Activated CD4-positive, alpha-beta T cell treated with anti-CD3 and anti-CD28 coated beads for 36 hours (primary cell): ENCODE measurements at regions of chr1 and their contacts with region 1.

Region 1: DNA sequence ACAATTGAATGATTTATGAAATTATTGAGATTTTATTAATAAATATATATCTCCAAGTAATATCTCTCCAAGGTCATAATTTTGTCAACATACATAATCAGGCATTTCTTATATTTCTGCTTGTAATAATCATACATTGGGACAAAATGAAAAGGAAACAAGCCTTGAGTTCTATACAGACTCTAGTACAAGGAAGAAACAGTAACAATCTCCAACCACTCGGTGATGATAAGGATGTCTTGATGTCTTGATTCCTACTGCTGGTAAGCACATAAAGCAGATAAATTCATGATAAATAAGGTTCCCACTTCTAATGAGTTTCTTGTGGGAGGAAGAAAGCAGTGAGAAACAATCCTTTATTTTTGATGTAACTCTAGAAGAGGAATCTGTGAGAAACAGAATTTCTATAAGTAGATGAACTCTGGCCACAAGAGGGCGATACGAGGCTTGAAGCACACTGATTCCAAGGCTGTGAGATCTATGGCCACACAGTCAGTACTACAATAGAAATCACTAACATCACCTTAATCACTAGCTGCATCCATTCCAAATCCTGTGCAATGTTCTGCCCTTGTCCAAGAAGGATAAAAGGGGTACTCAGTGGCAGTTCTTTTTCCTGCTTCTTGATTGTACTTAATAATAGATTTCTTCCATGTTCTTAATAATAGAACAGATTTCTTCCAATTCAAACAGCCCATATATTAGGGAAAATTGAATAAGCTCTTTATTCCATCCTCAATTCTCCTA is 41.4 kb upstream of the LRRC8B start:
- DNase-seq: peak; percentile 91
- ATAC-seq: peak; percentile 86
- H3K4me3 Mint-ChIP-seq: no peak overlapping the region
- H3K27ac Mint-ChIP-seq: no peak overlapping the region
- H3K4me1 Mint-ChIP-seq: peaks cover 21% of the 10 kb centered on the region
- H3K27me3 Mint-ChIP-seq: no peaks in the 10 kb centered on the region

Region 2: GRCh38 chr1:88341447-88341846 is 1141.7 kb before region 1 on chr1:
- CTCF ChIA-PET with region 1: no interaction called
- POLR2A ChIA-PET with region 1: no interaction called
- intact Hi-C with region 1: no loop called
- DNase-seq: no peak
- ATAC-seq: no peak
- H3K4me3 Mint-ChIP-seq: no peak overlapping the region
- H3K27ac Mint-ChIP-seq: no peak overlapping the region
- H3K4me1 Mint-ChIP-seq: no peaks in the 10 kb centered on the region
- H3K27me3 Mint-ChIP-seq: no peaks in the 10 kb centered on the region

Region 3: DNA sequence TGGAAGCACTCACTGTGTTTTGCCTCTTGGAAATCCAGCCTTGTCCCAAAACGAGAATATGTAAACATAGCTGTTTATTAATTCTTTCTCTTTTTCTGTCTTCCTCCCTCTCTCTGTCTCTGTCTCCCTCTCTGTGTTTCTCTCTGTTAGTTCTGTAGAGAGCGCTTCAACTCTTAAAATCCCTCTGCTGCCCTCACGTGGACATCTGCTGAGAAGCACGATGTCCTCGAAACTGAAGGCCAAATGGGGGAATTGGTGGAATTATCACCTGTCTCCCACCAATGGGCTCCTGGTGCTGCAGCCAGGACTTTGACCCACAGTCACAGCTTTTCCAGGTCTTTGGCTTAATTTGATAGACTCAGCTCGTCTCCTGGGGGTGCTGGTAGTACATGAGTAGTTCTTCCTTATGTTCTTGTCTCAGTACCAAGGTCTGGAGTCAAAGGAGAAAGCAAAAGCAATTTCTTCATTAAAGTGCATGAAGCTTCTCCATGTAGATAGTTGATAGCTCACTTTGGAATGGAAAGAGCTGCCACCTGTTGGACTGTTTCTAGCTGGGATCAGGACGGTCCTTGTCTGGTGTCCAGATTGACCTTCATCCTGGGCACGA is 124.8 kb before region 1 on chr1:
- CTCF ChIA-PET with region 1: no interaction called
- POLR2A ChIA-PET with region 1: no interaction called
- intact Hi-C with region 1: no loop called
- DNase-seq: peak; percentile 90
- ATAC-seq: peak; percentile 73
- H3K4me3 Mint-ChIP-seq: peak overlapping the region; percentile 55
- H3K27ac Mint-ChIP-seq: peak overlapping the region; percentile 84
- H3K4me1 Mint-ChIP-seq: peaks cover 46% of the 10 kb centered on the region
- H3K27me3 Mint-ChIP-seq: no peaks in the 10 kb centered on the region

Region 4: GRCh38 chr1:89433421-89433820 is 49.8 kb before region 1 on chr1:
- CTCF ChIA-PET with region 1: no interaction called
- POLR2A ChIA-PET with region 1: no interaction called
- intact Hi-C with region 1: no loop called
- DNase-seq: no peak
- ATAC-seq: no peak
- H3K4me3 Mint-ChIP-seq: no peak overlapping the region
- H3K27ac Mint-ChIP-seq: no peak overlapping the region
- H3K4me1 Mint-ChIP-seq: peaks cover 4% of the 10 kb centered on the region
- H3K27me3 Mint-ChIP-seq: peaks cover 5% of the 10 kb centered on the region

Region 5: GRCh38 chr1:89465201-89465600 is 18.0 kb before region 1 on chr1:
- CTCF ChIA-PET with region 1: interaction called, 14 read pairs
- POLR2A ChIA-PET with region 1: no interaction called
- intact Hi-C with region 1: no loop called
- DNase-seq: peak; percentile 53
- ATAC-seq: peak; percentile 94
- H3K4me3 Mint-ChIP-seq: no peak overlapping the region
- H3K27ac Mint-ChIP-seq: no peak overlapping the region
- H3K4me1 Mint-ChIP-seq: peaks cover 24% of the 10 kb centered on the region
- H3K27me3 Mint-ChIP-seq: peaks cover 56% of the 10 kb centered on the region

Region 6: DNA sequence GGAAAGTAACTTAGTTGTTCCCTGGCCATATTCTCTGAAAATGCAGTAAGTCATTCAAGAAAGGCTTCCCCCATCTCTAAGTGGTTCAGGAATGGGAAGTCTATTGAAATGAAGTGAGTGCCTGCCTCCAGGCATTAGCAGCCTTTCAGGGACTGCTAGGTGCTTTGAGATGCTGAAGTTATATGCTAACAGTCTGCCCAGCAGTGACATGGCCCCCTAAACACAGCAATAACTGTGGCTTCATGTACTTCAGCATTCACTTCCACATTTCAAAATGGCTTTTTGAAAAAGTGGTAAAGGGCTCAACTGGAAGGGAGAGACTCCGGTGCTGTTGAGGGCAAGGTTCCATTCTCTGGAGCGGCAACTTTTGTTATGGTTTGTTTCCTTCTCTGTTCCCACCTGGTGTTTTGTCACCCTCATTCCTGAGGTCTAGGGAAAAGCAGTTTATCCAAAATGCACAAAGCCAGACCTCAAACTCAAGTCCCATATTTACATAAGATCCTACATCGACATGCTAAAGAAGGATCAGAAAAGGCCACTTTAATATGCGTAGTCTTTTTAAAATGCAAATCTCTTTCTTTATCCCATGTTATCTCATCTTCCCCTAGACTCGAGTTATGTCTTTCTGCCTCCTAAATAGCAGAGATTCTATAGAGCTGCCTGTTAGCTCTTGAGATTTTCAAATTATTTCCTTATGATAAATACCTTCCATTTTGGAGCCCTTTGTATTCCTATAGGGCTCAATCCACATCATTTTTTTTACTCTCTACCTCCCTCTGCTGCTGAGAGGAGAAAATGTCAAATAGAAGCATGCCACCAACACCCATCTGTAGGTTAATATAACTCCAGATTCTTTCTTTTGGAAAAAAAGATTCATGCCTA is 115.5 kb after region 1 on chr1:
- CTCF ChIA-PET with region 1: interaction called, 30 read pairs
- POLR2A ChIA-PET with region 1: no interaction called
- intact Hi-C with region 1: loop called (anchors 1 to 2 kb)
- DNase-seq: no peak
- ATAC-seq: peak; percentile 14
- H3K4me3 Mint-ChIP-seq: no peak overlapping the region
- H3K27ac Mint-ChIP-seq: peak overlapping the region; percentile 99
- H3K4me1 Mint-ChIP-seq: peaks cover 85% of the 10 kb centered on the region
- H3K27me3 Mint-ChIP-seq: no peaks in the 10 kb centered on the region

Region 7: GRCh38 chr1:89615676-89616598 is 132.8 kb after region 1 on chr1:
- CTCF ChIA-PET with region 1: interaction called, 5 read pairs
- POLR2A ChIA-PET with region 1: no interaction called
- intact Hi-C with region 1: loop called in 1 of 2 experiments (anchors 5 kb)
- DNase-seq: peak; percentile 46
- ATAC-seq: no peak
- H3K4me3 Mint-ChIP-seq: no peak overlapping the region
- H3K27ac Mint-ChIP-seq: no peak overlapping the region
- H3K4me1 Mint-ChIP-seq: peaks cover 86% of the 10 kb centered on the region
- H3K27me3 Mint-ChIP-seq: no peaks in the 10 kb centered on the region

Region 8: GRCh38 chr1:89622895-89623294 is 139.7 kb after region 1 on chr1:
- CTCF ChIA-PET with region 1: interaction called, 10 read pairs
- POLR2A ChIA-PET with region 1: no interaction called
- intact Hi-C with region 1: loop called (anchors 1 to 2 kb)
- DNase-seq: no peak
- ATAC-seq: no peak
- H3K4me3 Mint-ChIP-seq: no peak overlapping the region
- H3K27ac Mint-ChIP-seq: no peak overlapping the region
- H3K4me1 Mint-ChIP-seq: peaks cover 63% of the 10 kb centered on the region
- H3K27me3 Mint-ChIP-seq: no peaks in the 10 kb centered on the region

Region 9: GRCh38 chr1:89804642-89805237 is 321.6 kb after region 1 on chr1:
- CTCF ChIA-PET with region 1: interaction called, 3 read pairs
- POLR2A ChIA-PET with region 1: no interaction called
- intact Hi-C with region 1: loop called in 1 of 2 experiments (anchors 1 kb)
- DNase-seq: peak; percentile 93
- ATAC-seq: peak; percentile 90
- H3K4me3 Mint-ChIP-seq: no peak overlapping the region
- H3K27ac Mint-ChIP-seq: no peak overlapping the region
- H3K4me1 Mint-ChIP-seq: peaks cover 5% of the 10 kb centered on the region
- H3K27me3 Mint-ChIP-seq: peaks cover 3% of the 10 kb centered on the region

Region 10: DNA sequence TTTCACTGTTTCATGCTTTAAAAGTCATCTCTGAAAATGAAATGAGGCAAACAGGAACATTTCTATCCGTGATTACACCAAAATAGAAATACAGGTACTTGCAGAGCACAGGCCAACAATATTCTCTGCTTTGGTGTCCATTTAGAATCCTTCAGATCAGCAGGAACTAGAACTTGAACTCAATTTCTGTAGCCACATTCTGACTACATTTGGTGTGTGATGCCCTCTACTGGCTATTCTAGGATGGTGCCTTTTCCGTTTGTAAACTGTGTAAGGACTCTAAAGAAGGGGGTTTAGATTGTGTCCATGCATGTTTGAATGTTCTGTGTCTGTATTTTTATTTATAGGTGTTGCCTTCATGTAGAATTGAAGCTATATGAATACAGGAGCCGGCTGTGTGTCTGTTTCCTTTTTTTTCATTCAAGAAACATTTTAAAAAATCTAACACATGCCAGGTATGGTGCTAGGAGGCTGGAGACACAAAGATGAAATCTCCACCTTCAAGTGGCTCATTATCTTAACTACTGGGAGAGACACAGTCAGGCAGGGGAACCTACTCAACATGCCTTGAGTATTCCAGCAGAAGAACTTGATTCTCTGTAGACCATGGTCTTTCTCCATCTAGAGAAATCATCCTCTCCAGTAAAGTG is 504.1 kb after region 1 on chr1:
- CTCF ChIA-PET with region 1: no interaction called
- POLR2A ChIA-PET with region 1: no interaction called
- intact Hi-C with region 1: loop called (anchors 1 to 2 kb)
- DNase-seq: peak; percentile 54
- ATAC-seq: peak; percentile 90
- H3K4me3 Mint-ChIP-seq: no peak overlapping the region
- H3K27ac Mint-ChIP-seq: no peak overlapping the region
- H3K4me1 Mint-ChIP-seq: peaks cover 11% of the 10 kb centered on the region
- H3K27me3 Mint-ChIP-seq: peaks cover 2% of the 10 kb centered on the region